ENCODE measurements at regions of chr21 and their contacts with region 1.

Region 1: DNA sequence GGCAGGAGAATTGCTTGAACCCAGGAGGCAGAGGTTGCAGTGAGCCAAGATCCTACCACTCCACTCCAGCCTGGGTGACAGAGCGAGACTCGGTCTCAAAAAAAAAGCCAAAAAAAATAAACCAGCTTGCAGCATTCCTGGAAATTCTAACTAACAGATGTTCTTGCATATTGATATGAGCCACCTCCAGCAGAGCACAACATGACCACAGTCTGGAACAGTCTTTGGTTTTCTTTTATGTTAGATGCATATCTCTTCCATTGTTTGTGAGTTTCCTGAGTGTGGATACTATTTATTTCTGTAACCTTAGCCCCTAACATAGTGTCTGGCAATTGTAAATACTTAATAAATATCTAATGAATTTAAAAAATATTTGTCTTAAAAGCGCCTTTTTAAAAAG is 23.9 kb downstream of the IFNAR1 start:
- DNase-seq: no peak
- ATAC-seq: no peak
- H3K4me3 ChIP-seq: no peak overlapping the region
- H3K27ac ChIP-seq: no peak overlapping the region
- H3K4me1 ChIP-seq: no peaks in the 10 kb centered on the region
- H3K27me3 ChIP-seq: no peaks in the 10 kb centered on the region
- CTCF ChIP-seq: no peak
- POLR2A ChIP-seq: no peak
- RAD21 ChIP-seq: no peak

Region 2: DNA sequence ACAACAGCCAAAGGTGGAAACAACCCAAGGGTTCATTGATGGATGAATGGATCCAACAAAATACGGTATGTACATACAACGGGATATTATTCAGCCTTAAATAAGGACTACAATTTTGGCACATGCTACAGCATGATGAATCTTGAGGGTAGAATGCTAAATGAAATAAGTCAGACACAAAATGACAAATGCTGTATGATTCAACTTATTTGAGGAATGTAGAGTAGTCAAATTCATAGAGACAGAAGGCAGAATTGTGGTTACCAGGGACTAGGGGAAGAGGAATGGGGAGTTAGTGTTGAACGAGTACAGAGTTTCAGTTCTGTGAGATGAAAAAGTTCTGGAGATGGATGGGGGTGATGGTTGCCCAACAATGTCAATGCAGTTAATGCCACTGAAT is 459.1 kb before region 1 on chr21:
- CTCF ChIA-PET with region 1: no interaction called
- POLR2A ChIA-PET with region 1: no interaction called
- dilution Hi-C with region 1: no loop called
- in situ Hi-C with region 1: no loop called
- intact Hi-C with region 1: no loop called
- DNase-seq: no peak
- ATAC-seq: no peak
- H3K4me3 ChIP-seq: no peak overlapping the region
- H3K27ac ChIP-seq: no peak overlapping the region
- H3K4me1 ChIP-seq: no peaks in the 10 kb centered on the region
- H3K27me3 ChIP-seq: peaks cover 2% of the 10 kb centered on the region; the same call in 1 of the 2 replicates
- CTCF ChIP-seq: no peak
- POLR2A ChIP-seq: no peak
- RAD21 ChIP-seq: no peak

Region 3: GRCh38 chr21:33185852-33186251 is 162.9 kb before region 1 on chr21:
- CTCF ChIA-PET with region 1: no interaction called
- POLR2A ChIA-PET with region 1: no interaction called
- dilution Hi-C with region 1: no loop called
- in situ Hi-C with region 1: no loop called
- intact Hi-C with region 1: no loop called
- DNase-seq: no peak
- ATAC-seq: no peak
- H3K4me3 ChIP-seq: no peak overlapping the region
- H3K27ac ChIP-seq: no peak overlapping the region
- H3K4me1 ChIP-seq: no peaks in the 10 kb centered on the region
- H3K27me3 ChIP-seq: peaks cover 38% of the 10 kb centered on the region
- CTCF ChIP-seq: no peak
- POLR2A ChIP-seq: no peak
- RAD21 ChIP-seq: no peak

Region 4: DNA sequence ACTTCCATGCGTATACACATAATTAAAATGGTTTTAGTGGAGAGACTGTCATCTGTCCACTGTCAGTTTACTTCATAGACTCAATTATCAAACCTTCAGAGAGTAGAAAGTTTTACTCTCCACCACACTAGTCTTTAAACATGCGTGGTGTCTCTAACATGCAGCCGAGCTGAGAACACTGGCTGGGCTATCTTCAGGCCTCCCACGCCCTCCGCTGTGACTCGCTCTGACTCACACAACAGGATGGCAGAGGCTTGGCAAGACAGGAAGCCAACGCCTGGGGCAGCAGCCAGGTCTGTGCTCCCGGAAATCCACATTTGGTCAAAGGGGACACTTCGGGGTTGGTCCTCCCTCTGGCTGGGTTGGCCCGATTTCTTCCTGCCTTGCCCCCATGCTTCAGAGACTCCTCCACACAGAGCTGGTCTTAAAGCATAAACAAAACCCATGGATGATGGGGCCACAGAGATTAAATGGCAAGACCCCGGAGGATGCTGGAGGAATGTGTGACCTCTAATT is 31.8 kb after region 1 on chr21:
- CTCF ChIA-PET with region 1: no interaction called
- POLR2A ChIA-PET with region 1: no interaction called
- dilution Hi-C with region 1: no loop called
- in situ Hi-C with region 1: no loop called
- intact Hi-C with region 1: no loop called
- DNase-seq: peak; percentile 96
- ATAC-seq: peak; percentile 91
- H3K4me3 ChIP-seq: no peak overlapping the region
- H3K27ac ChIP-seq: peak overlapping the region; percentile 50
- H3K4me1 ChIP-seq: peaks cover 12% of the 10 kb centered on the region
- H3K27me3 ChIP-seq: no peaks in the 10 kb centered on the region
- CTCF ChIP-seq: no peak
- POLR2A ChIP-seq: peak; percentile 84
- RAD21 ChIP-seq: peak; percentile 11; the same call in 1 of the 2 replicates

Region 5: DNA sequence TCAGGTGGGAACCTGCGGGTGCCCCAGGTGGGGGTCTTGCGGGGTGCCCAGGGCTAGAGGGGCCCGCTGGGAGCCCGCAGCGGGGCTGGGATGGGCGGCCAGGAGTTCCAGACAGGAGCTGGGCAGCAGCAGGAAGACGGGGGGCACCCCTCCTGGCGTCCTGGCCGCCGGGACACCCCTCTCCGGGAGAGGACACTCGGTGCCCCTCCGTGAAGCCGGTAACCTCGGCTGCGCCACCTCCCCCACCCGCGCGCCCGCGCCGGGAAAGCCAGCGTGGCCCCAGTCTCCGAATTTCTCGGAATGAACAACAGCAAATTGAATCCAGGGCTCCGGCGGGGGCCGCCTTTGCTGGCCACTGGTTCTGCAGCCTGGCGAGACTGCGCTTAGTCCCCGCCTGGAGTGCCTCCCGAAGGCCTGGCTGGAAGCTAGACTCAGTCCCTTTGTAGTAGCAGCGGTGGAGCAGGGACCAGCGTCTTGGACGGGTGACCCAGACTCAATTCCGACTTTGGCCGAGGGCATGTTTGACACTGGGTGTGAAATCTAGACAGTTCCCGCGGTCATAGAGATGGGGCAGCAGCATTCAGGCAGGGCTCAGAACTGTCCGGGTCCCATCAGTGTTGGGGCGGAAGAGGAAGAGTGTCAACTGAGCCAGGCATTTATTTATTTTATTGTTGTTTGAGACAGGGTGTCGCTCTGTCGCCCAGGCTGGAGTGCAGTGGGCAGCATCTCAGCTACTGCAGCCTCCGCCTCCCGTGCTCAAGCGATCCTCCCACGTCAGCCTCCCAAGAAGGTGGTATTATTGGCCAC is 55.3 kb after region 1 on chr21:
- CTCF ChIA-PET with region 1: no interaction called
- POLR2A ChIA-PET with region 1: no interaction called
- dilution Hi-C with region 1: no loop called
- in situ Hi-C with region 1: no loop called
- intact Hi-C with region 1: loop called (anchors 10 kb)
- DNase-seq: peak; percentile 49
- ATAC-seq: peak; percentile 55
- H3K4me3 ChIP-seq: peak overlapping the region; percentile 79
- H3K27ac ChIP-seq: peak overlapping the region; percentile 78
- H3K4me1 ChIP-seq: peaks cover 7% of the 10 kb centered on the region
- H3K27me3 ChIP-seq: no peaks in the 10 kb centered on the region
- CTCF ChIP-seq: no peak
- POLR2A ChIP-seq: peak; percentile 52
- RAD21 ChIP-seq: 0 out of 2 replicates have a peak, but pooled peaks have one; percentile 5